CD4-positive, alpha-beta T cell (primary cell): ENCODE measurements at regions of chr11 and their contacts with region 1.

Region 1: DNA sequence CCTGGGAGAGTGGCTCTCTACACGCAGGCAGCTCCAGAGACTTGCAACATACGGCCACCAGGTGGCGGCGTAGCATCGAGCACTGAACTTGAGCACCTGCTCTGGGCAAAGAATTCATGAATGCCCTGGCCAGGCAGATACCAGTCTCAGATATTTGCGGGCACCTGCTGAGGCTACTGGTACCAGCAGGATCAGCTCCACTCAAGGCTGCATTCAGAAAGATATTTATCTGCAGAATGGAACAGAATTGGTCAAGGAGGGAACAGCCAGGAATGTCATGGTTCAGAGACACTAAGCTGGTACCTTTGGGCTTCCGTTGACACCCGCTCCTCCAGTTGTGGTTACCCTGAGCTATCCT is 10.8 kb upstream of the CCDC86 start:
- DNase-seq: peak; percentile 68 to 89 (median 76)
- ATAC-seq: peak; percentile 94
- H3K4me3 ChIP-seq: peak overlapping the region; percentile 19
- H3K4me3 Mint-ChIP-seq: no peak overlapping the region
- H3K27ac ChIP-seq: no peak overlapping the region
- H3K27ac Mint-ChIP-seq: no peak overlapping the region
- H3K4me1 ChIP-seq: peaks cover 5% of the 10 kb centered on the region
- H3K4me1 Mint-ChIP-seq: no peaks in the 10 kb centered on the region
- H3K27me3 ChIP-seq: peaks cover 0 to 3% of the 10 kb centered on the region in 2 experiments
- H3K27me3 Mint-ChIP-seq: peaks cover 17% of the 10 kb centered on the region
- CTCF ChIP-seq: peak; percentile 90

Region 2: GRCh38 chr11:60145677-60146076 is 685.4 kb before region 1 on chr11:
- CTCF ChIA-PET with region 1: no interaction called
- POLR2A ChIA-PET with region 1: no interaction called
- intact Hi-C with region 1: no loop called
- DNase-seq: no peak
- ATAC-seq: no peak
- H3K4me3 ChIP-seq: no peak overlapping the region
- H3K4me3 Mint-ChIP-seq: no peak overlapping the region
- H3K27ac ChIP-seq: no peak overlapping the region
- H3K27ac Mint-ChIP-seq: no peak overlapping the region
- H3K4me1 ChIP-seq: no peaks in the 10 kb centered on the region
- H3K4me1 Mint-ChIP-seq: peaks cover 10% of the 10 kb centered on the region
- H3K27me3 ChIP-seq: no peaks in the 10 kb centered on the region
- H3K27me3 Mint-ChIP-seq: no peaks in the 10 kb centered on the region
- CTCF ChIP-seq: no peak

Region 3: DNA sequence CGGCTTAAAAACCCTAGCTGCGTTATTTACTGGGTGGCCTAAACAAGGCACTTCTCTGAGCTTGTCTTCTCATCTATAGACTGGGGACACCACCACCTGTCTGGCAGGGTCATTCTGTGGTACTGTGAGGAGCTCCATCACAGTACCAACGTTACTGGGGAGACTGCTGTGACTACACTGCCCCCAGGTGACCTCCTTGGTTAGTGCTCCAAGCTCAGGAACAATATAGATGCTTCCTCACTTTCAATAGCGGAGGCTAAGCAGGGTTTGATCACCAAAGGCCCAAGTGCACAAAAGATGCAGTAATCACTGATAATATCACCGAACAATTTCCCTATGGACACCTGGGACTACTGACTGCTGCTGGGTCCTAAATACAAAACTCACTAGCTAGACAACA is 56.4 kb after region 1 on chr11:
- CTCF ChIA-PET with region 1: interaction called, 25 read pairs
- POLR2A ChIA-PET with region 1: interaction called, 5 read pairs
- intact Hi-C with region 1: loop called in 1 of 2 experiments (anchors 1 kb)
- DNase-seq: peak in 7 of 14 experiments; percentile 11 to 64 (median 33)
- ATAC-seq: peak; percentile 67
- H3K4me3 ChIP-seq: no peak overlapping the region
- H3K4me3 Mint-ChIP-seq: no peak overlapping the region
- H3K27ac ChIP-seq: no peak overlapping the region
- H3K27ac Mint-ChIP-seq: peak overlapping the region; percentile 19
- H3K4me1 ChIP-seq: no peaks in the 10 kb centered on the region
- H3K4me1 Mint-ChIP-seq: peaks cover 6% of the 10 kb centered on the region
- H3K27me3 ChIP-seq: no peaks in the 10 kb centered on the region
- H3K27me3 Mint-ChIP-seq: no peaks in the 10 kb centered on the region
- CTCF ChIP-seq: no peak

Region 4: DNA sequence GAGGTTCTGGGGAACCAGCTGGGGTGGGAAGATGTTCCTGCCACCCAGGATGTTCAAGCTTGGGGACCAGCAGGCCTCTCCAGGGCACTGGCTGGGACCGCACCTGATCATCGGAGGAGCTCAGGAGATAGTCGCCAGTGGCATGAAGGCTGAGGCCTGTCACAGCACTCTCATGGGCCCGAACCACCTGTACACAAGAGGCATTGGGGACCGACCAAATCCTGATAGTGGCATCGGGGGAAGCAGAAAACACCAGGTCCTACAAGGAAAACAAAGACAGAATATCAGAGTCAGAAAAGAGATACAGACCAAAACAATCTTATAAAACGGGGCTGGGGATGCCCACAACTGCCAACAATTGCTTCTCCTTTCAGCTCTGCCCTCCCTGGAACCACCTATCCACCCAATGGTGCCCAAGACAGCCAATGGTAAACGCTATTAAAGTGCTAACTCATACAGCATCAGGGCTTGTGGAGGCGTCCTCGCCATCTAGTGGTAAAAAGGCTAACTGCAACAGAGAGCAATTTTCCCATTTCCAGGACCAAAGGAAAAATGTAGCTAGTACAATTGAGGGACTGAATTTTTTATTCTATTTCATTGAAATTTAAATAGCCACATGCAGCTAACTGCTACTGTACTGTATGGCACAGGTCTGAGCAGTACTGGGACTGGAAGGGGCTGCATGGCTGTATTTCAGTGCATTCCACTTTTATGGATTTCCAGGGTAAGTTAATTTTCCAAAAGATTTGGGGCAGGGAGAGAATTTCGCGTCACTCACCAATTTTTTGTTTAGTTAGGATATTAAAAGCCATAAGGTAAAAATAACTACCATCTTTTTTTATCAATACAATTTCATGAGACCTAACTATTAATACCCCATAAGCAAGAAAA is 68.2 kb after region 1 on chr11:
- CTCF ChIA-PET with region 1: interaction called, 18 read pairs
- POLR2A ChIA-PET with region 1: no interaction called
- intact Hi-C with region 1: loop called (anchors 2 kb)
- DNase-seq: peak in 5 of 14 experiments; percentile 11 to 76 (median 41)
- ATAC-seq: peak; percentile 70
- H3K4me3 ChIP-seq: no peak overlapping the region
- H3K4me3 Mint-ChIP-seq: no peak overlapping the region
- H3K27ac ChIP-seq: no peak overlapping the region
- H3K27ac Mint-ChIP-seq: no peak overlapping the region
- H3K4me1 ChIP-seq: peaks cover 11% of the 10 kb centered on the region
- H3K4me1 Mint-ChIP-seq: peaks cover 21% of the 10 kb centered on the region
- H3K27me3 ChIP-seq: no peaks in the 10 kb centered on the region
- H3K27me3 Mint-ChIP-seq: no peaks in the 10 kb centered on the region
- CTCF ChIP-seq: peak; percentile 90

Region 5: GRCh38 chr11:61129639-61130523 is 298.8 kb after region 1 on chr11:
- CTCF ChIA-PET with region 1: interaction called, 4 read pairs
- POLR2A ChIA-PET with region 1: interaction called, 4 read pairs
- intact Hi-C with region 1: loop called (anchors 1 kb)
- DNase-seq: peak; percentile 86 to 94 (median 88)
- ATAC-seq: peak; percentile 84
- H3K4me3 ChIP-seq: no peak overlapping the region
- H3K4me3 Mint-ChIP-seq: peak overlapping the region; percentile 52
- H3K27ac ChIP-seq: peak overlapping the region; percentile 29 to 50
- H3K27ac Mint-ChIP-seq: peak overlapping the region; percentile 50
- H3K4me1 ChIP-seq: peaks cover 25% of the 10 kb centered on the region
- H3K4me1 Mint-ChIP-seq: peaks cover 39% of the 10 kb centered on the region
- H3K27me3 ChIP-seq: no peaks in the 10 kb centered on the region
- H3K27me3 Mint-ChIP-seq: no peaks in the 10 kb centered on the region
- CTCF ChIP-seq: peak; percentile 99

Region 6: GRCh38 chr11:61187505-61188130 is 356.5 kb after region 1 on chr11:
- CTCF ChIA-PET with region 1: interaction called, 19 read pairs
- POLR2A ChIA-PET with region 1: no interaction called
- intact Hi-C with region 1: loop called (anchors 1 kb)
- DNase-seq: peak; percentile 64 to 89 (median 75)
- ATAC-seq: peak; percentile 89
- H3K4me3 ChIP-seq: no peak overlapping the region
- H3K4me3 Mint-ChIP-seq: no peak overlapping the region
- H3K27ac ChIP-seq: no peak overlapping the region
- H3K27ac Mint-ChIP-seq: no peak overlapping the region
- H3K4me1 ChIP-seq: no peaks in the 10 kb centered on the region
- H3K4me1 Mint-ChIP-seq: no peaks in the 10 kb centered on the region
- H3K27me3 ChIP-seq: no peaks in the 10 kb centered on the region
- H3K27me3 Mint-ChIP-seq: peaks cover 3% of the 10 kb centered on the region
- CTCF ChIP-seq: peak; percentile 99

Region 7: GRCh38 chr11:61384271-61385242 is 553.4 kb after region 1 on chr11:
- CTCF ChIA-PET with region 1: interaction called, 3 read pairs
- POLR2A ChIA-PET with region 1: no interaction called
- intact Hi-C with region 1: loop called (anchors 2 kb)
- DNase-seq: no peak
- ATAC-seq: no peak
- H3K4me3 ChIP-seq: no peak overlapping the region
- H3K4me3 Mint-ChIP-seq: no peak overlapping the region
- H3K27ac ChIP-seq: no peak overlapping the region
- H3K27ac Mint-ChIP-seq: no peak overlapping the region
- H3K4me1 ChIP-seq: peaks cover 6% of the 10 kb centered on the region
- H3K4me1 Mint-ChIP-seq: peaks cover 7% of the 10 kb centered on the region
- H3K27me3 ChIP-seq: no peaks in the 10 kb centered on the region
- H3K27me3 Mint-ChIP-seq: no peaks in the 10 kb centered on the region
- CTCF ChIP-seq: no peak

Region 8: DNA sequence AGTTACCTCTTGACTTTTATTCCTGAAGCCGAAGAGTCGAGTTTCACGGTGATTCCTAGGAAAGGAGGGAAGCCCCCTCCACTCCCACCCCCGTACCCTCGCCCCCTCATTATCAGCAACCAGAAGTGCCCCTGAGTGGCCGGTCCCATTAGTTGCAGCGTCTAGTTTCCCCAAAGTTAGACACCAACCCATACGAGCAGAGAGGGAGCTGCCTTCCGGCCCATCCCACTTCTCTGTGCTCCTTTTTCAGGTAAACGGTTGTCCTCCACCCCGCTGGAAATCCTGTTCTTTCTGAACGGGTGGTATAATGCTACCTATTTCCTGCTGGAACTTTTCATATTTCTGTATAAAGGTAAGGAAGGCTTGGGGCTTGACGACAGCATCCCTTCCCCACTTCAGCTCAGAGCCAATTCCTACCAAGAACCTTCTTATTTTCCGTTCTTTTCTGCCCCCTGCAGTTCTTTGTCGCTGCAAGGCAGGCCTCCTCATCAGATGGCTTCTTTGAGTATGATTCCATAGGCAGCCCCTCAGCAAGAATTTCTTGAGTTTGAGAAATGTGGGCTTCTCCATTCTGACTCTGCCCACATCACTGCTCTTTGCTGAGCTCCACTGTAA is 562.0 kb after region 1 on chr11:
- CTCF ChIA-PET with region 1: interaction called, 4 read pairs
- POLR2A ChIA-PET with region 1: no interaction called
- intact Hi-C with region 1: loop called in 1 of 2 experiments (anchors 2 kb)
- DNase-seq: peak in 9 of 14 experiments; percentile 3 to 65 (median 14)
- ATAC-seq: peak; percentile 59
- H3K4me3 ChIP-seq: peak overlapping the region; percentile 76
- H3K4me3 Mint-ChIP-seq: peak overlapping the region; percentile 98
- H3K27ac ChIP-seq: peak overlapping the region; percentile 79 to 89
- H3K27ac Mint-ChIP-seq: peak overlapping the region; percentile 99
- H3K4me1 ChIP-seq: peaks cover 28% of the 10 kb centered on the region
- H3K4me1 Mint-ChIP-seq: peaks cover 23% of the 10 kb centered on the region
- H3K27me3 ChIP-seq: no peaks in the 10 kb centered on the region
- H3K27me3 Mint-ChIP-seq: no peaks in the 10 kb centered on the region
- CTCF ChIP-seq: peak; percentile 51